ENCODE measurements at regions of chr6 and their contacts with region 1.

Region 1: GRCh38 chr6:152206072-152206818 is 398.8 kb downstream of the ESR1 start:
- H3K4me3 Mint-ChIP-seq: no peak overlapping the region
- H3K27ac Mint-ChIP-seq: no peak overlapping the region
- H3K4me1 Mint-ChIP-seq: no peaks in the 10 kb centered on the region
- H3K27me3 Mint-ChIP-seq: no peaks in the 10 kb centered on the region

Region 2: DNA sequence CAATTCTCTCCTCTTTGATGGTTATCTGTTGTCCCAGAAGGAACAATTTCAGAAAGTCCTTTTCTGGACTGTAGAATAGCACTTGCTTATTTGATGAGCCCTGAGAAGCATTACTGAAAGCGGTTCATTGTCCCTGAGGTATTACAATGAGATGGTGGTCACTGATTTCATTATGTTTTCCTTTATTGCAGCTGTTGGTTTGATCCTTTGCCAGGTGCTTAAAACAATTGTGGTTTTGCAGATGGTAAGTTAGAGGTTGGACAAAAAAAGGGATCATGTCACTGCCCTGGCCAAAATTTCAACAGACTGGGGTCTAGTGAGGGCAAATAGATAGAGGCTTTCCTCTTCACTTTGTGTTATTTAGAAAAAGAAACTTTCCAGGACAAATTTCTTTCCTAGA is 336.9 kb before region 1 on chr6:
- intact Hi-C with region 1: no loop called
- H3K4me3 Mint-ChIP-seq: no peak overlapping the region
- H3K27ac Mint-ChIP-seq: no peak overlapping the region
- H3K4me1 Mint-ChIP-seq: no peaks in the 10 kb centered on the region
- H3K27me3 Mint-ChIP-seq: no peaks in the 10 kb centered on the region

Region 3: GRCh38 chr6:152356451-152357061 is 150.3 kb after region 1 on chr6:
- intact Hi-C with region 1: loop called (anchors 2 kb)
- H3K4me3 Mint-ChIP-seq: no peak overlapping the region
- H3K27ac Mint-ChIP-seq: no peak overlapping the region
- H3K4me1 Mint-ChIP-seq: no peaks in the 10 kb centered on the region
- H3K27me3 Mint-ChIP-seq: no peaks in the 10 kb centered on the region

Region 4: GRCh38 chr6:152595505-152595904 is 389.3 kb after region 1 on chr6:
- intact Hi-C with region 1: no loop called
- H3K4me3 Mint-ChIP-seq: no peak overlapping the region
- H3K27ac Mint-ChIP-seq: no peak overlapping the region
- H3K4me1 Mint-ChIP-seq: no peaks in the 10 kb centered on the region
- H3K27me3 Mint-ChIP-seq: no peaks in the 10 kb centered on the region

Measured in dendritic cell treated with granulocyte-macrophage colony-stimulating factor and Interleukin-4, amounts not matched to agents 40 ng/mL and 50 ng/mL, for 4 days (primary cell).